Adrenal gland (tissue), 19 donors: ENCODE measurements at regions of chr16 and their contacts with region 1.

Region 1: DNA sequence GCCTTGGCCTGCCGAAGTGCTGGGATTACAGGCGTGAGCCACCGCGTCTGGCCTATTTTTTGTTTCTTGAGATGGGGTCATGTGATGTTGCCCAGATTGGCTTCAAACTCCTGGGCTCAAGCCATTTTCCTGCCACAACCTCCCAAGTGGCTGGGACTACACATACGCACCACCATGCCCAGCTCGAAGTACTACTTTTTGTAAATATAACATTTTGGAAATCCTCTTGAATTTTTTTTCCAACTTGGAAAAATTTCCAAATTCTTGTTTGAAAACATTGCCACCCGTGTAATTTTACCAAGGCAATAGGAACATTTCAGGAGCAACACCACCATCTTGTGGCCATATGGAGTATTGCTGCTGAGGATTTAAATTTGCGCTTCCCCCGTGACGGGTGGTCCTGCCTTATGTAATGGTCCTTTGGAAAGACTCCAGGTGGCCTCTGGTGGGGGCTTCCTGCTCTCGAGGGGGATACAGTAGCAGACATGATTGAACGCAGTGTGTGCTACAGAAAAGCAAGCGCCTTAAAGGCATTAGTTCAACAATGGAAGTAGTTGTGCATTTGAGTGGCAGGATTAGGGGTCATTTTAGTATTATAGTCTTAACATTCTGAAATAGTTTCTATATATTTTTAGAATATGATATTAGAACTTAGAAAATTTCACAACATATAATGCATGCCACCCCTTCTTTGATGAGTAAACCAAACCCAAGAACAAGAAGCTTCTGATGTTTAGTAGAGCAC is 8.0 kb downstream of the FLYWCH1 start:
- DNase-seq: peak; percentile 56 to 88 (median 72)
- H3K4me3 ChIP-seq: no peak overlapping the region
- H3K27ac ChIP-seq: peak overlapping the region in 4 of 5 donors; percentile 15 to 81 (median 63)
- H3K4me1 ChIP-seq: peaks cover 0 to 10% of the 10 kb centered on the region in 2 donors
- H3K27me3 ChIP-seq: no peaks in the 10 kb centered on the region
- CTCF ChIP-seq: peak; percentile 93 to 98 (median 95)
- POLR2A ChIP-seq: no peak

Region 2: GRCh38 chr16:1757714-1758404 is 1161.8 kb before region 1 on chr16:
- intact Hi-C with region 1: no loop called
- DNase-seq: no peak
- H3K4me3 ChIP-seq: no peak overlapping the region
- H3K27ac ChIP-seq: no peak overlapping the region
- H3K4me1 ChIP-seq: no peaks in the 10 kb centered on the region
- H3K27me3 ChIP-seq: no peaks in the 10 kb centered on the region
- CTCF ChIP-seq: no peak
- POLR2A ChIP-seq: no peak

Region 3: DNA sequence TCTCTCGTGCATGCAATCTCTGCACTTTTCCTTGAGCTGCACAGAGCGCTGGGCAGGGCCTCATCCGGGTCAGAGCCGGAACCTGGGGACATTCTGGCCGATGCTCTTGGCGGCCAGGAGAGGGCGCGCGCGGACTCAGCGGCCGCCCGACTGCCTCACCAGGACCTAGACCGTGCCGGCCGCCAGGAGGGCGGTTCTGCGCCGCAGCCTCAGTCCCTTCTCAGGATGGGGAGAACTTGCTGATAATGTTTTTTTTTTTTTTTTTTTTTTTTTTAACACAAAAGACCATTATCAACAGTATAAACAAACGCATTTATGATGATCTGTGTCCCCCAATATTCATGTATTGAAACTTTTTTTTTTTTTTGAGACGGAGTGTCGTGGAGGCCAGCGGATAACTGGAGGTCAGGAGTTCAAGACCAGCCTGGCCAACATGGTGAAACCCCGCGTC is 44.7 kb before region 1 on chr16:
- intact Hi-C with region 1: loop called (anchors 2 to 5 kb)
- DNase-seq: peak; percentile 77 to 90 (median 84)
- H3K4me3 ChIP-seq: no peak overlapping the region
- H3K27ac ChIP-seq: no peak overlapping the region
- H3K4me1 ChIP-seq: peaks cover 4 to 6% of the 10 kb centered on the region in 2 donors
- H3K27me3 ChIP-seq: no peaks in the 10 kb centered on the region
- CTCF ChIP-seq: peak; percentile 94 to 99 (median 98)
- POLR2A ChIP-seq: no peak

Region 4: GRCh38 chr16:3074860-3075522 is 155.3 kb after region 1 on chr16:
- intact Hi-C with region 1: no loop called
- DNase-seq: no peak
- H3K4me3 ChIP-seq: no peak overlapping the region
- H3K27ac ChIP-seq: peak overlapping the region in 1 of 5 donors; percentile 40
- H3K4me1 ChIP-seq: no peaks in the 10 kb centered on the region
- H3K27me3 ChIP-seq: no peaks in the 10 kb centered on the region
- CTCF ChIP-seq: no peak
- POLR2A ChIP-seq: no peak